CD8-positive, alpha-beta T cell (primary cell): ENCODE measurements at regions of chr10 and their contacts with region 1.

Region 1: GRCh38 chr10:101569838-101570766 is 18.0 kb downstream of the POLL start:
- DNase-seq: peak; percentile 67 to 90 (median 79)
- ATAC-seq: peak; percentile 92
- H3K4me3 ChIP-seq: peak overlapping the region; percentile 69
- H3K4me3 Mint-ChIP-seq: peak overlapping the region; percentile 72
- H3K27ac ChIP-seq: no peak overlapping the region
- H3K27ac Mint-ChIP-seq: no peak overlapping the region
- H3K4me1 ChIP-seq: peaks cover 16% of the 10 kb centered on the region
- H3K4me1 Mint-ChIP-seq: peaks cover 20% of the 10 kb centered on the region
- H3K27me3 ChIP-seq: peaks cover 27 to 30% of the 10 kb centered on the region in 2 experiments
- H3K27me3 Mint-ChIP-seq: peaks cover 38% of the 10 kb centered on the region
- CTCF ChIP-seq: peak; percentile 89

Region 2: DNA sequence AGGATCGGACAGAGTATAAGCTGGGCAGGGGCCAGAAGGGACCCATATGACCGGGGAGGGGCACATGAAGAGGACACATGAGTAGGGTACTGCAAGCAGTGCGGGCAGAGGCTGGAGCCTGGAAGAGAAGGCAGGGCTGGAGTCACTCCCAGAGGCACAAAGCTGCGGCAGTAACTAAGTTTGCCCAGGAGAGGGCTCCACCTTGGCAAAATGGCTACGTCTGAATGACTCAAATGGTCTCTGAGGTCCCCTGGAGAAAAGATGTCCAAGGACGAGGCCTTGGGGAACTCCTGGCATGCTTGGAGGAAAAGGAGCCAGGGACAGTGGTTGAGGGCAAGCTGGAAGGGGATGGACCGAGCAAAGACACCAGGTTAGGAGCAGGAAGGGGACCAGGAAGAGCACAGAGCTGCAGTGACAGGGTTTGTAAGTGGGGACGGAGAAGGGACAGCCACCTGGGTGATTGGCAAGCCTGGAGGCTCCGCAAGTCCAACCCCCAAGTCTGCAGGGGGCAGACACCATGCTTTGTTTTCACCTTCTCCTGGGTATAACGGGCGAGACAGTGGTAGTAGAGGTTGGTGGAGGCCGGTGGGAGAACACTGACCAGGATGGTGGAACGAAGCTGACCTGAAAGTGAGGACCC is 297.8 kb before region 1 on chr10:
- CTCF ChIA-PET with region 1: interaction called, 6 read pairs
- POLR2A ChIA-PET with region 1: no interaction called
- intact Hi-C with region 1: loop called in 1 of 2 experiments (anchors 1 kb)
- DNase-seq: peak; percentile 34 to 70 (median 55)
- ATAC-seq: peak; percentile 80
- H3K4me3 ChIP-seq: no peak overlapping the region
- H3K4me3 Mint-ChIP-seq: no peak overlapping the region
- H3K27ac ChIP-seq: no peak overlapping the region
- H3K27ac Mint-ChIP-seq: no peak overlapping the region
- H3K4me1 ChIP-seq: no peaks in the 10 kb centered on the region
- H3K4me1 Mint-ChIP-seq: no peaks in the 10 kb centered on the region
- H3K27me3 ChIP-seq: peaks cover 0 to 2% of the 10 kb centered on the region in 2 experiments
- H3K27me3 Mint-ChIP-seq: peaks cover 34% of the 10 kb centered on the region
- CTCF ChIP-seq: peak; percentile 65

Region 3: GRCh38 chr10:101467286-101467770 is 102.8 kb before region 1 on chr10:
- CTCF ChIA-PET with region 1: interaction called, 13 read pairs
- POLR2A ChIA-PET with region 1: no interaction called
- intact Hi-C with region 1: loop called in 1 of 2 experiments (anchors 5 kb)
- DNase-seq: peak in 5 of 9 experiments; percentile 7 to 73 (median 23)
- ATAC-seq: peak; percentile 75
- H3K4me3 ChIP-seq: no peak overlapping the region
- H3K4me3 Mint-ChIP-seq: no peak overlapping the region
- H3K27ac ChIP-seq: no peak overlapping the region
- H3K27ac Mint-ChIP-seq: no peak overlapping the region
- H3K4me1 ChIP-seq: peaks cover 4% of the 10 kb centered on the region
- H3K4me1 Mint-ChIP-seq: peaks cover 8% of the 10 kb centered on the region
- H3K27me3 ChIP-seq: no peaks in the 10 kb centered on the region
- H3K27me3 Mint-ChIP-seq: no peaks in the 10 kb centered on the region
- CTCF ChIP-seq: peak; percentile 86

Region 4: DNA sequence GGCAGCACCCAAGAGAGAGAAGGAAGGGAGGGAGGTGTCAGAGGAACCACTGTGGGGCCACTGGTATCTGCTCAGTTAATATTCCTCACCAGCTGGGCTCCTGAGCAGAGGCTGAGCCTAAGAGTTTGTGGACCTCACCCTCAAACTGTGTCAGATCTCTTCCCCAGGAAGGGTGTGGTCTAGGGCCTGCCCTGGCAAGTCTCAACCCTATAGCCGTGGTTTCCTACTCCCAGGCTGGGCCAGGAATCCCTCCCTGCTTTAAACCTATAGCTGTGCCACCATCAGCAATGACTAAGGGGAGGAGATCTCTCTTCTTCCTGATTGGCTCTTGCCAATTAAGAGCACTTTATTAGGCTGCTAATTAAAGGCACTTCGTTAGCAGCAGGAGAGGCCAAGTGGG is 11.9 kb before region 1 on chr10:
- CTCF ChIA-PET with region 1: interaction called, 29 read pairs
- POLR2A ChIA-PET with region 1: no interaction called
- intact Hi-C with region 1: no loop called
- DNase-seq: no peak
- ATAC-seq: peak; percentile 26
- H3K4me3 ChIP-seq: no peak overlapping the region
- H3K4me3 Mint-ChIP-seq: no peak overlapping the region
- H3K27ac ChIP-seq: no peak overlapping the region
- H3K27ac Mint-ChIP-seq: no peak overlapping the region
- H3K4me1 ChIP-seq: peaks cover 9% of the 10 kb centered on the region
- H3K4me1 Mint-ChIP-seq: peaks cover 12% of the 10 kb centered on the region
- H3K27me3 ChIP-seq: no peaks in the 10 kb centered on the region
- H3K27me3 Mint-ChIP-seq: peaks cover 5% of the 10 kb centered on the region
- CTCF ChIP-seq: no peak

Region 5: DNA sequence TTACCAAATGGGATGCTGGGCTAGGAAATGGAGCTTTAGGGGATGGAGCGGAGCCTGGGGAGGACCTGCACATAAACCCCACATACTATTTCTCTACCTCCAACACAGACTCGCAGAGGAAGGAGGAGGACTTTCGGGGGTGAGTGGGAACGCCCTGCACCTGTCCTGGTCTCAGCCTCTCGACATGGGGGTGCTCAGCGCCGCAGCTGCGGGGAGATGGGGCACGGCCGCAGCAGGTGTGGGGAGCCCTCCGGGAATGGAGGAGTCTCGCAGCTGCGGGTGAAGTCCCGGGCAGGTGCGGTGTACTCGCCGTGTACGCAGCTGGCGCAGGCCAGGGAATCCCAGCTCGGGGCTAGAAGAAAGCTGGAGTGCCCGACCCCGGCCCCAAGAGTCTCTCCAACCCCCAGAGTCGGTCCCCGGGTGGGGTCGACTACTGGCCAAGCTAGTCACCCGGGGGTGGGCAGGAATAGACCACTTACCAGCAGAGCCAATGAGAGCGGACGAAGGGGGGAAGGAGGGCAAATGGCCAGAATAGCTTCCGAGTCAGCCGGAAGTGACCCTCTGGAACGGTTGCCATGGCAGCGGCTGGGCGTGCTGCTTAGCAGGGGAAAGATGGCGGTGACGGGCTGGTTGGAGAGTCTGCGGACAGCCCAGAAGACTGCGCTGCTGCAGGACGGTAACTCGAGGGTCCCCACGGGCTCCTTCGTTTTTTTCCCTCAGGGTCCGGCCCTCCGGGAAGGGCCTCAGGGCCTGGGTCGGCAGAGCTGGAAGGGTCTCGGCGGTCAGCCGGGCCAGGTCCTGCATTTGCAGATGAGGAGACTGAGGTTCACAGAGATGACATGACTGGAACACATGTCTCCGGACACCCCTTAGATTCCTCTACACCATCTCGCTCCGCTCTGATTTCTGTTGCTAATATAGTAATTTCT is 17.9 kb after region 1 on chr10 and contains the starts of genes DPCD and POLL:
- CTCF ChIA-PET with region 1: interaction called, 20 read pairs
- POLR2A ChIA-PET with region 1: no interaction called
- intact Hi-C with region 1: loop called in 1 of 2 experiments (anchors 1 kb)
- DNase-seq: peak; percentile 77 to 94 (median 91)
- ATAC-seq: peak; percentile 91
- H3K4me3 ChIP-seq: peak within 1 kb of the TSS; percentile 98
- H3K4me3 Mint-ChIP-seq: peak within 1 kb of the TSS; percentile 94
- H3K27ac ChIP-seq: peak within 1 kb of the TSS; percentile 69 to 72
- H3K27ac Mint-ChIP-seq: peak within 1 kb of the TSS; percentile 90
- H3K4me1 ChIP-seq: peaks cover 19% of the 10 kb centered on the region
- H3K4me1 Mint-ChIP-seq: peaks cover 25% of the 10 kb centered on the region
- H3K27me3 ChIP-seq: no peaks in the 10 kb centered on the region
- H3K27me3 Mint-ChIP-seq: no peaks in the 10 kb centered on the region
- CTCF ChIP-seq: no peak
- total RNA-seq, gene DPCD: 1.0 TPM in 1 of 2 experiments, not detected in the other
- total RNA-seq, gene POLL: 19.9 to 23.0 TPM

Region 6: DNA sequence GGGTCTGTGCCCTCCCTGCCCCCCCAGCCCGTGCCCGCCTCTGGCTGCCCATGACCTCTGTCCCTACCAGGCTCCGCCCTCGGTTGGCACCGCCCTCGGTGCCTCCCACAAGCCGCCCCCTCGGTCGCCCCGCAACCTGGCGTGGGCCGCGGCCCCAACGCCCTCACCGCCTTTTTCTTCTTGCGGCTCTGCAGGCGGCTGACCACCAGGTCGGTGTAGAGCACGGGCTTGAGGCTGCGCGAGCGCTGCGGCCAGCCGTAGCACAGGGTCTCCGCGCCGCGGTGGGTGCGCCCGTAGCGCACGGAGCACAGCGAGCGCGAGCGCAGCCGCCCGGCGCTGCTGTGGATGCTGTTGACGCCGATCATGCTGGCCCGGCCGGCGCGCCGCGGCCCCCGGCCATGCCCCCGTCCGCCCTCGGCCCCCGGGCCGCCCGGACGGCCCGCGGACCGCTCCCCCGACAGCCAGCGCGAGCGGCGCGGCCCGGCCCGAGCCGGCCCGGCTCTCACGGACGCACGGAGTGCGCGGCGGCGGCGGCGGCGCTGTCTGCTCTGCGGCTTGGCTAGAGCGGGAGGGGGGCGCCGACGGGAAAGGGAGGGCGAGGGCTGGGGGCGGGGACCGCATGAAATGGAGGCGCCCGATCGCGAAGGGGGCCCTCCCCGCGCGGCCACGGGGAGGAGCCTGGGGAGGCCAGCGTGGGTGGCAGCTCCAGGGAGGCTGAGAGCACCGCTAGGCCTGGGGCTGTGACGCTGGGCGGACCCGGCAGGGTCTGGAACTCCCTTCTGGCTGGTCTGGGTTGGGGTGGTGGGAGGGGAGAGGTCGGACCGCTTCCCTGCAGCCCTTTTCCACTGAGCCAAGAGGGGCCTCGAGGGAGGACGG is 838.9 kb after region 1 on chr10:
- CTCF ChIA-PET with region 1: no interaction called
- POLR2A ChIA-PET with region 1: no interaction called
- intact Hi-C with region 1: no loop called
- DNase-seq: peak; percentile 49 to 86 (median 79)
- ATAC-seq: peak; percentile 72
- H3K4me3 ChIP-seq: peak overlapping the region; percentile 39 to 68
- H3K4me3 Mint-ChIP-seq: peak overlapping the region; percentile 83
- H3K27ac ChIP-seq: peak overlapping the region; percentile 31 to 43
- H3K27ac Mint-ChIP-seq: peak overlapping the region; percentile 91
- H3K4me1 ChIP-seq: peaks cover 36% of the 10 kb centered on the region
- H3K4me1 Mint-ChIP-seq: peaks cover 37% of the 10 kb centered on the region
- H3K27me3 ChIP-seq: peaks cover 0 to 26% of the 10 kb centered on the region in 2 experiments
- H3K27me3 Mint-ChIP-seq: peaks cover 17% of the 10 kb centered on the region
- CTCF ChIP-seq: no peak